Transverse colon (tissue), 4 donors: ENCODE measurements at regions of chr3 and their contacts with region 1.

Region 1: GRCh38 chr3:64030741-64031140 is 7.4 kb upstream of the PSMD6 start:
- DNase-seq: peak; percentile 79
- H3K4me3 ChIP-seq: peak overlapping the region in 3 of 4 donors; percentile 4 to 30 (median 9)
- H3K27ac ChIP-seq: no peak overlapping the region
- H3K4me1 ChIP-seq: peaks cover 0 to 7% (median 3%) of the 10 kb centered on the region in 4 donors
- H3K27me3 ChIP-seq: peaks cover 6% of the 10 kb centered on the region
- CTCF ChIP-seq: peak; percentile 86 to 92 (median 91)
- EP300 ChIP-seq: no peak
- POLR2A ChIP-seq: no peak

Region 2: DNA sequence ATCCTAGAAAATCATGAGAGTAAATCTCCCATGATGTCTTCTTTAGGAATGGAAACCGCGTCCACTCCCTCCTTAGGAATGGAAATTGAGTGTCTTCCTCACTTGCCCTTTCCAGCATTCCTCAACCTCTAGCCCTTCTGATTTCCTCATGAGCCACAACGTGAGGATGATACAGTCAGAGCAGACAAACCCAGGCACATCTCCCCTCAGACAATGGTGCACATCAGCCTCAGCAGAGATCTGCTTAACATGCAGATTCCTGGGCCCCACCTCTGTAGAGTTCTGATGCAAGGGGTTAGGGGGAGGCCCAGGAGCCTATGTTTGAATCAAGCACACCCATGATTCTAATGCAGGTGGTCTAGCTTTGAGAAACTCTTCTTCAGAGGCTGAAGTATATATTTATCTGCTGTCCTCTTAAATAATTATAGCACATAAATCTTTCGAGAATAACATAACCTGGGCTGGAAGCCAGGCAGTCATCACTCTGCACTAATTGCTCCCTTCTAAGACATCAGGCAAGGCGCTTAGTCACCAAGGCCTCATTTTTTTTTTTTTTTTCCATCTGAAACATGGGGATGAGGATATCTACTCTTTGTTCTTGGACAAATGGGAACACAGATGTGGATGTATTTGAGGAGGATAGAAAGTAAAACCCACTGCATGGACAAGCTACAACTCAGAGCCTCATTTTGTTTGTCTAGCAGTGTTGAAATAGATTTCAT is 112.8 kb after region 1 on chr3:
- in situ Hi-C with region 1: no loop called
- intact Hi-C with region 1: loop called (anchors 10 kb)
- DNase-seq: no peak
- H3K4me3 ChIP-seq: no peak overlapping the region
- H3K27ac ChIP-seq: peak overlapping the region in 2 of 4 donors; percentile 20 to 26
- H3K4me1 ChIP-seq: peaks cover 0 to 11% (median 0%) of the 10 kb centered on the region in 4 donors
- H3K27me3 ChIP-seq: no peaks in the 10 kb centered on the region
- CTCF ChIP-seq: no peak
- EP300 ChIP-seq: no peak
- POLR2A ChIP-seq: no peak

Region 3: GRCh38 chr3:64224826-64225610 is 194.3 kb after region 1 on chr3 and contains the start of gene PRICKLE2:
- in situ Hi-C with region 1: no loop called
- intact Hi-C with region 1: no loop called
- DNase-seq: peak; percentile 57
- H3K4me3 ChIP-seq: peak within 1 kb of the TSS in 1 of 4 donors; percentile 17
- H3K27ac ChIP-seq: peak within 1 kb of the TSS; percentile 72 to 84 (median 80)
- H3K4me1 ChIP-seq: peaks cover 0 to 55% (median 28%) of the 10 kb centered on the region in 4 donors
- H3K27me3 ChIP-seq: no peaks in the 10 kb centered on the region
- CTCF ChIP-seq: no peak
- EP300 ChIP-seq: no peak
- POLR2A ChIP-seq: no peak
- total RNA-seq, gene PRICKLE2: 8.5 to 38.4 (median 17.4) TPM

Region 4: GRCh38 chr3:64399205-64399800 is 368.6 kb after region 1 on chr3:
- in situ Hi-C with region 1: loop called (anchors 5 to 10 kb)
- intact Hi-C with region 1: loop called (anchors 2 kb)
- DNase-seq: no peak
- H3K4me3 ChIP-seq: no peak overlapping the region
- H3K27ac ChIP-seq: peak overlapping the region in 2 of 4 donors; percentile 67 to 69
- H3K4me1 ChIP-seq: peaks cover 0 to 6% (median 0%) of the 10 kb centered on the region in 4 donors
- H3K27me3 ChIP-seq: no peaks in the 10 kb centered on the region
- CTCF ChIP-seq: peak; percentile 69 to 74 (median 70)
- EP300 ChIP-seq: no peak
- POLR2A ChIP-seq: no peak

Region 5: DNA sequence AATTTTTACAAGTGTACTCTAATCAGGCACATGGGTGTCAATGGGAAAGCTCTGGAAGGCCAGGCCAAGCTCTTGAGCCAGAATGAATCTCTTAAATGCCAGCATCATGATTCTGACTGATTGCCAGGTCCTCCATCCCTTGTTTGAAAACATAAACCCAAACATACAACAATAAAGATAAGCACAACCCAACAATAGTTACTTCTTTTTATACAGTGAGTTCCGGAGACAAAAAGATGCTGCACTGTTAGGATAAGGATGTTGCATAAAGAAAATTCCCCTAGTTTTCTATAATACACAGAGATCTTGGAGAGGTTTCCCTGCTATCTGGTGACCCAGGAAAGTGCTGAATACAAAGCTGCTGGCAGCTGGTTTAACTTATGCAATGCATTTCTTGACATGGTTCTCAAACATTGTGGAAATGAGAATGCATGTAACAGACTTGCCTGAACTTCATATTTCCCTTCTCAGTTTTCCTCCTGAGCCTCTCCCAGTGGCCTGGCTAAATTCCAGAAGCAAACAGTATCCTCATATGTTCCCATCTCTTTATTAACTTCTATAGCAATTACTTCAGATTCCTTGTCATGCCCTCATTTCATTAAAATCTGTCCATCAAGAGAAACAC is 374.6 kb after region 1 on chr3:
- in situ Hi-C with region 1: loop called in 1 of 4 experiments (anchors 10 kb)
- intact Hi-C with region 1: loop called (anchors 2 kb)
- DNase-seq: no peak
- H3K4me3 ChIP-seq: no peak overlapping the region
- H3K27ac ChIP-seq: no peak overlapping the region
- H3K4me1 ChIP-seq: no peaks in the 10 kb centered on the region
- H3K27me3 ChIP-seq: no peaks in the 10 kb centered on the region
- CTCF ChIP-seq: no peak
- EP300 ChIP-seq: no peak
- POLR2A ChIP-seq: no peak

Region 6: DNA sequence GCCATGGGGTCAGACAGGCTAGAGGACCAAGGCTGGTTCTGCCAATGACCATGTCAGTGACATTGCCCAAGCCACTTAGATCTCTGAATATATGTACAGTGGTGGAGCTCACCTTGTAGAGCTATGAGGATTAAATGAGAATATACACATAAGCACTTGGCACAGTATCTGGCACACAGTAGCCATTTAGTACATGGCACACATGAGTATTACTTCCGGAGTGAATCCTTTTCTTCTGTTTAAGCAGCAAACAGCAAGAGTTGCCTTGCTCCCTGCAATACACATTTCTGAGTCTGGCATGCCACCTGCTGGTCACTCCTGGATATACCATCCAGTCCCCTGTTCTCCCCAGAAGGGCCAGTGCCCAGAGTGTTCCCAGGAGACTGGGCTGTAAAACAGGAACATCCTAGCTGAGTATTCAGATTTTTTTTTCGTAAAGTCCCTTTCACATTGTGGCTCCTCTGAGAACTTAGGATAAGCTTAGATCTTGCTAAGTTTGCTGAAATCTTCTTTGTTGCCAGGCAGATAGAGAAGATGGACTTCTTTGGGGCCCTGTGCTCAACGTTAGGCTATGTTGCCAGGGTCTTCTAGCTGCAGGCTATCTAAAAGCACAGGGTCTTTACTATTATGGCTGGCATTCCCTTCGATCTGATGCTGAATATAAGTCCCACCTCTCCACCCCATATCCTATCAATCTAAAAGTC is 453.7 kb after region 1 on chr3:
- in situ Hi-C with region 1: loop called (anchors 5 to 10 kb)
- intact Hi-C with region 1: loop called (anchors 5 kb)
- DNase-seq: peak; percentile 78
- H3K4me3 ChIP-seq: no peak overlapping the region
- H3K27ac ChIP-seq: no peak overlapping the region
- H3K4me1 ChIP-seq: peaks cover 0 to 8% (median 5%) of the 10 kb centered on the region in 4 donors
- H3K27me3 ChIP-seq: no peaks in the 10 kb centered on the region
- CTCF ChIP-seq: peak; percentile 78 to 85 (median 81)
- EP300 ChIP-seq: no peak
- POLR2A ChIP-seq: no peak

Region 7: GRCh38 chr3:64548200-64548889 is 517.6 kb after region 1 on chr3:
- in situ Hi-C with region 1: no loop called
- intact Hi-C with region 1: no loop called
- DNase-seq: peak; percentile 64
- H3K4me3 ChIP-seq: no peak overlapping the region
- H3K27ac ChIP-seq: peak overlapping the region; percentile 59 to 89 (median 79)
- H3K4me1 ChIP-seq: peaks cover 5 to 20% (median 10%) of the 10 kb centered on the region in 4 donors
- H3K27me3 ChIP-seq: no peaks in the 10 kb centered on the region
- CTCF ChIP-seq: no peak
- EP300 ChIP-seq: no peak
- POLR2A ChIP-seq: no peak